ENCODE measurements at regions of chr12 and their contacts with region 1.

Region 1: DNA sequence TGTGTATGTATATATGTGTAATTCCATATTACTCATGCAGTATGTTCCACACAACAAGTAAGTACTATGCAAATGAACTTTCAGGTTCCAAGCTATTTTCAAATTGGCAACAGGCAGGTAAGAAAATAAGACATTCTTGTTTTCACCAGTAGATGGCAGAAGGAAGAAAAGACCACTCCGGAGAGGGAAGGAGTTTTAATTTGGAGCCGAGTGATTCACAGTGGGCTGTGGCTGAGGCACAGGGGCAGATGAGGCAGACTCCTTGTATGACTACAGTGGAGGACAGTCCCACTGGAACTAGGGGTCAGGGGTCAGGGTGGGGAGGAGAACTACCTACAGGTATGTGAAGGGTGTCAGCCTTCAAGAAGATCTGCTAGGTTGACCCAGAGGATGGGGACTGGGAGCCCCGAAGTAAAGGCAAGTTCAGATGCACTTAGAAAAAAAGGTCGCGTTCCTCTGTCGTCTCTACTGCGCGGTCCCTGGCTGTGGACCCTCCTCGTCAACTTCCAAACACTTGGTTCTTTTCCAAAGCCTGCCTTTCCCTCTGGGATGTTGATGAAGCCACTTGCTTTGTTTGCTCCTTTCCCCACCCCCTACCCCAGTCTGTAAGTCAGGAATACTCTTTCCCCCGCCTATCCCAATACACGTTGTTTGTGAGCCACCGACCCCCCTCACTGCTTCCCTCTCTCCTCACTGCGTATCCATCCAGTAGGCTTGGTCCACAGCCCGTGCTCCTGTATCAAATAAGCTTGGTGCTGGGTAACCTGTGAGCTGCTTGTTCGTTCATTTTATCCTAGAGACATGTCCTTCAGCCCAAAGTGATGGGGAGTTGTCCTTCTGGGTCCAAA is 24.1 kb downstream of the DDX47 start:
- DNase-seq: peak; percentile 76 to 78
- H3K4me3 ChIP-seq: no peak overlapping the region
- H3K4me3 Mint-ChIP-seq: peak overlapping the region; percentile 0
- H3K27ac Mint-ChIP-seq: peak overlapping the region; percentile 46
- H3K4me1 ChIP-seq: peaks cover 45% of the 10 kb centered on the region
- H3K4me1 Mint-ChIP-seq: peaks cover 50% of the 10 kb centered on the region
- H3K27me3 ChIP-seq: no peaks in the 10 kb centered on the region
- H3K27me3 Mint-ChIP-seq: no peaks in the 10 kb centered on the region
- CTCF ChIP-seq: peak; percentile 73 to 85

Region 2: GRCh38 chr12:12883369-12884001 is 46.2 kb after region 1 on chr12:
- CTCF ChIA-PET with region 1: no interaction called
- POLR2A ChIA-PET with region 1: interaction called, 7 read pairs
- intact Hi-C with region 1: loop called (anchors 1 kb)
- DNase-seq: peak; percentile 88 to 90
- H3K4me3 ChIP-seq: no peak overlapping the region
- H3K4me3 Mint-ChIP-seq: peak overlapping the region; percentile 70
- H3K27ac Mint-ChIP-seq: peak overlapping the region; percentile 88
- H3K4me1 ChIP-seq: peaks cover 61% of the 10 kb centered on the region
- H3K4me1 Mint-ChIP-seq: peaks cover 80% of the 10 kb centered on the region
- H3K27me3 ChIP-seq: no peaks in the 10 kb centered on the region
- H3K27me3 Mint-ChIP-seq: no peaks in the 10 kb centered on the region
- CTCF ChIP-seq: no peak

Region 3: DNA sequence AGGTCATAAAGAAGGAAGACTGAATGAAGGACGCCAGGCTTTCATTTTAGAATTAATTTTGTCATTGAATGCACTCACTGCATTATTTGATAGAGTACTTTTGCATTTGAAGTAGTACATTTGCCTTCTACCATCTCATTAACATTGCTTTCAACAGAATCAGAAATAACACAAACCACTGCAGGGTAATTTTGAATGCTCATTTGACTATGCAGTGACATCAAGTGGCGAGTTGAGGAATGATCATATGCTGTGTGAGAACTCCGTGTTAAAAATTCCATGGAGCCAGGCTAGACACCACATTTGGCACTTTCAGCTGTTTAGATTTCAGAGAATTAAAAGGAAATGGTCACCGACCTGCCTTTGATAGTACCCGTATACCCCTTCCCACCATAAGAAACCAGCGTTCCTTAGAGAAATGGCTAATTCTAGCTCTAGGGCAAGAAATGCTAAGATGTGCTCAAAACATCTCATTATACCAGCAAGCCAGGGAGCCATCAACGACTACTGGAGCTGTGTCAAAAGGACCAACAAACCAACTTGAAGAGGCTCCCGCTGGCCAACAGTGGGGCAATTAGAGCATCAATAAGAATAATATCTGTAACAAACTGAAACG is 146.3 kb after region 1 on chr12:
- CTCF ChIA-PET with region 1: interaction called, 5 read pairs
- POLR2A ChIA-PET with region 1: no interaction called
- intact Hi-C with region 1: loop called (anchors 1 kb)
- DNase-seq: peak in 1 of 2 experiments; percentile 70
- H3K4me3 ChIP-seq: no peak overlapping the region
- H3K4me3 Mint-ChIP-seq: no peak overlapping the region
- H3K27ac Mint-ChIP-seq: no peak overlapping the region
- H3K4me1 ChIP-seq: peaks cover 23% of the 10 kb centered on the region
- H3K4me1 Mint-ChIP-seq: no peaks in the 10 kb centered on the region
- H3K27me3 ChIP-seq: no peaks in the 10 kb centered on the region
- H3K27me3 Mint-ChIP-seq: no peaks in the 10 kb centered on the region
- CTCF ChIP-seq: peak; percentile 75 to 78